ENCODE measurements at regions of chr1 and their contacts with region 1.

Region 1: DNA sequence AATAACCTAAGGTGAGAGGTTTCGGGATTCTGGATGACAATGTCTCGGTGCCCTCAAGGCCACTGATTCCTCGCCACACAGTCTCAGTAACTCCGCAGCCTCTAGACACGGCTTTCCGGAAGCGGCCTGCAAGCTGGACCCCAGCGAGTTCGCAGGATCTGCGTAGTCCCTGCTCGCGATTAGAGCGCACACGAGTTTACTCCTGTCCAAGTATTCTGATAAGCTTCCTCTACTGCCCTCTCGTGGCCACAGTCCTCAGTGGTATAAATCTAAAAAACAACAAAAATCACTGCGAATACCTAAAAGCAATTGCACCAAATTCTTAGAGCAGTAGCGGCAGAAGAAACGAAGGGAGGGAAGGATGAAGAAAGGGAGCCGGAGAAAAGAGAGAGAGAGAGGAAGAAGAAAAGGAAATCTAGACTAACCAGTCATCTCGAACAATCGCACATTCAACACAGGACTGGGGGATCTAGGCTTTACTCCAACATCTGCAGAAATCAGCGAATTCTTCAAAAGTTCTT is 1.1 kb upstream of the PLXNA2 start:
- DNase-seq: peak; percentile 84
- CTCF ChIP-seq: peak; percentile 88

Region 2: DNA sequence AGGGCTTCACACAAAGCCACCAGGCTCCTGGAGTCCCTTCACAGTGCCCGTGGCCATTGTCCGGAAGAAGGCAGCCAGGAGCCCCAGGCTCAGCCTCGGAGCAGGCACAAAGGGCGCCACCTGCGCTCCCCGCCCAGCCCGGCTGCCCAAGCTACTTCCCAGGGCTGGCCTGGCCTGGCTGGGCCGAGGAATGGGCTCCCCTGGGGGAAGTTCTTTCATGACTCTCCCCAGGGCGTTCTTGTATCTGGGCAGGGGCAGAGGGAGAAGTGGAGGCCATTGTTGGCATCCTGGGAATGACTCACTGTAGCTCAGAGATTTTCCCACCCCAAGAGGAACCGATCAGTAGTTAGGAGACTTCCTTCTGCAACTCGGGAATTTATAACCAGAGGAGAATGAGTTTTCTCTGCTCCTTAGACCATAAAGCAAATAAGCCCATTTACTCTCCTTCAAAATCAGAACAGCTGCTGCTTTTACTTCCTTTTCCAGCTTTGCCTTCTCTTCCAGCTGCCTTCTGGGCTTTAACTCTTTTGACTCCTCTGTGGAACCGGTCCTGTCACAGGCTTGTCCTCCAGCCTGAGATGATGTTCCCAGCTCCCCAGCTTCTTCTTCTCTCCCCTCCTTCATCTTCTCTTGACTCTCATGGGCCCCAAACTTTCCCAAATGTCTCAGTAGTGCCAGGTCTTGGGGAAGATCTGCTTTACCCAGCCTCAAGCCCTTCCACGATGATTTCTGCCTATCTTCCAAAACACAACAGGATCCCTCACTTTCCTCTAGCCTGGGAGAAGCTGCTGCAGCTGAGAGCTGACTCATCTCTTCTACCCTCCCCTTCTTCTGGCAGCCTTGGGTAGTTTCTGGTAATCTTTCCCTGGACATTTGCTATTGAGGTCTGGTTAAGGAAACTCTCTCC is 215.6 kb before region 1 on chr1:
- in situ Hi-C with region 1: loop called (anchors 10 kb)
- DNase-seq: no peak
- CTCF ChIP-seq: no peak

Region 3: GRCh38 chr1:208132287-208132883 is 112.9 kb before region 1 on chr1:
- in situ Hi-C with region 1: loop called (anchors 25 kb)
- DNase-seq: peak; percentile 80
- CTCF ChIP-seq: peak; percentile 93

Region 4: GRCh38 chr1:208335371-208336136 is 90.3 kb after region 1 on chr1:
- in situ Hi-C with region 1: no loop called
- DNase-seq: no peak
- CTCF ChIP-seq: no peak

Region 5: GRCh38 chr1:208541225-208541855 is 296.1 kb after region 1 on chr1:
- in situ Hi-C with region 1: no loop called
- DNase-seq: no peak
- CTCF ChIP-seq: no peak

Measured in GM13977 (cell line).